ENCODE measurements at regions of chr10 and their contacts with region 1.

Region 1: GRCh38 chr10:28580825-28581224 is 47.9 kb downstream of the WAC start:
- DNase-seq: no peak
- ATAC-seq: no peak
- H3K4me3 ChIP-seq: no peak overlapping the region
- H3K27ac ChIP-seq: no peak overlapping the region
- H3K4me1 ChIP-seq: peaks cover 4% of the 10 kb centered on the region
- H3K27me3 ChIP-seq: no peaks in the 10 kb centered on the region
- CTCF ChIP-seq: no peak
- POLR2A ChIP-seq: no peak
- RAD21 ChIP-seq: no peak

Region 2: DNA sequence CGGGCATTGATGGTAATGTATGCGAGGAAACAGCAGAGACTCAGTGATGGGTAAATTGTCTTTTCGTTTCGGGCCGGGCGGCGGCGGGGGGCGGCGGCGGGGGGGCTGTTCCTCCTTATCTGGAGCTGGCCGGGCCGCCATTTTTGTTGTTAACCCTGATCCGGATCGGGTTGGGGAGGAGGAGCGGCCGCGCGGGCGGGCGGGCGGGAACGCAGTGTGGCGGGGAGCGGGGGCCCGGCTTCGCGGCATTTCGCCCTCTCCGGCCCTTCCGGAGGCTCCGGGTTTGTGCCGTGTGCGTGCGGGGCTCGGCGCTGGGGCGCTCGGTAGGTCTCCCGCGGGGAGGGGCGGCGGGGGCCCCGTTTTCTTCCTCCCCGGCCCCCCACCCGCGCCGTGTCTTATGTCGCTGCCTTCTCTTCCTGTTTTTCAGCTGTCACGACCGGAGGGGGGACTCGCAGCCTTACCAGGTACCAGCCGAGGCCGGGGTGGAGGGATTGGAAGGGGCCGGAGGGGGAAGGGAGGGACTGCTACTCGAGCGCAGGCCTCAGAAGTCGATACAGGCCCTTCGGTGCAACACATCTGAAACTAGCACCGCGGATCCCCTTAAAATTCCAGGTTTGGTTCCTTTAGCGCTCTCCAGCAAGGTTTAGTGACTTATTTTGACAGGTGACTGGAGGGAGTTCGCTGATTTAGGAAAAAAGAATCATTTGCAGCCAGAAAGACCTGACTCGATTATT is 47.1 kb before region 1 on chr10:
- CTCF ChIA-PET with region 1: no interaction called
- POLR2A ChIA-PET with region 1: interaction called, 10 read pairs
- dilution Hi-C with region 1: no loop called
- in situ Hi-C with region 1: no loop called
- intact Hi-C with region 1: no loop called
- DNase-seq: peak; percentile 26
- ATAC-seq: peak; percentile 42
- H3K4me3 ChIP-seq: peak overlapping the region; percentile 92
- H3K27ac ChIP-seq: peak overlapping the region; percentile 99
- H3K4me1 ChIP-seq: no peaks in the 10 kb centered on the region; the same call in 1 of the 2 replicates
- H3K27me3 ChIP-seq: no peaks in the 10 kb centered on the region
- CTCF ChIP-seq: no peak
- POLR2A ChIP-seq: no peak
- RAD21 ChIP-seq: no peak

Region 3: DNA sequence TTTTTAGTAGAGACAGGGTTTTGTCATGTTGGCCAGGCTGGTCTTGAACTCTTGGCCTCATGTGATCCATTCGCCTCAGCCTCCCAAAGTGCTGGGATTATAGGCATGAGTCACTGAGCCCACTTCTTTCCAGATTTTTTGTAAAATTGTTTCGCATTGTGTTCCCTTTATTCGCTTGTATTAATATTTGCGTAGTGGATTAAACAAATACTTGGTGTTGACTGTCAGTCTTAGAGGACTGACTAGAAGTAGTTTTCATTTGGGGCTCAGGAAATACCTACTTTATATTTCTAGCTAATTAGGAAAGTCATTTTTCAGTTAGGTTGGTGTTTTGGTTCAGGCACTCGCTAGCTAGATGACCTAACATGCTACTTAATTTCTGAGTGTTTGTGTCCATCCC is 36.8 kb before region 1 on chr10:
- CTCF ChIA-PET with region 1: no interaction called
- POLR2A ChIA-PET with region 1: no interaction called
- dilution Hi-C with region 1: no loop called
- in situ Hi-C with region 1: no loop called
- intact Hi-C with region 1: no loop called
- DNase-seq: no peak
- ATAC-seq: no peak
- H3K4me3 ChIP-seq: no peak overlapping the region
- H3K27ac ChIP-seq: no peak overlapping the region
- H3K4me1 ChIP-seq: peaks cover 1% of the 10 kb centered on the region; the same call in 1 of the 2 replicates
- H3K27me3 ChIP-seq: no peaks in the 10 kb centered on the region
- CTCF ChIP-seq: no peak
- POLR2A ChIP-seq: no peak
- RAD21 ChIP-seq: no peak